Posterior cingulate gyrus (tissue), 11 donors: ENCODE measurements at regions of chr22 and their contacts with region 1.

Region 1: DNA sequence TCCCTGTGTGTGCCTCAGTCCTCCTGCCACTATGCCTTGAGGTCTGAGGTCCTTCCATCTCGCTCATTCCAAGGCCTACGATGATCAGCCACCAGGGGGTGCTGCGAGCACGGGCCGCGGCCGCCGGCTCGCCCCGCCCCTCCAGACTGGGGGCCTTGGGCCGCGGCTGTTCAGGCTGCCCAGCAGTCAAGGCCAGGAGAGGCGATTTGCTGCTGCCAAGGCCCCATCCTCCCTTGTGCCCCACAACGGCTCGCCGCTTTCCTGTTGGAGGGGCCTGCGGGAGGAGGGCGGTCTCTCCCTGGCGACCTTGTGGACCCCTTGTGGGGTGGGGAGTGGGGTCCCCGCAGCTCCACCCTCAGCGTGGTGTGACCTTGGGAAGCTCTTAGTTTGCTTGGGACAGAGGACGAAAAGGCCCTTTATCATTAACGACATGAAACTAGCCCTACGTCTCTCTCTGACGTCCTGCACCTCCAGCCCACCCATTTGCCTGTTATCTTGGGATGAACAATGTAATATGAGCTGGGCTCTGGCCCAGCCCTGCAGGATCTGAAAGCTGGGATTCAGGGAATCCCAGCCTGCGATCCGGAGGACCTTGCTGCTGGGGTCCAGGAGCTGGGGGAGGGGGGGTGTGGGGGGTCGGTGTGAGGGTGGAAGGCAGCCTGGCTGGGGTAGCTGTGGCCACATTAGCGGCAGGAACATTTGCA is 5.3 kb upstream of the GALR3 start:
- DNase-seq: peak; percentile 74 to 98 (median 89)

Region 2: GRCh38 chr22:37696657-37697537 is 121.0 kb before region 1 on chr22 and contains the start of gene TRIOBP:
- intact Hi-C with region 1: no loop called
- DNase-seq: peak; percentile 68 to 98 (median 85)

Region 3: DNA sequence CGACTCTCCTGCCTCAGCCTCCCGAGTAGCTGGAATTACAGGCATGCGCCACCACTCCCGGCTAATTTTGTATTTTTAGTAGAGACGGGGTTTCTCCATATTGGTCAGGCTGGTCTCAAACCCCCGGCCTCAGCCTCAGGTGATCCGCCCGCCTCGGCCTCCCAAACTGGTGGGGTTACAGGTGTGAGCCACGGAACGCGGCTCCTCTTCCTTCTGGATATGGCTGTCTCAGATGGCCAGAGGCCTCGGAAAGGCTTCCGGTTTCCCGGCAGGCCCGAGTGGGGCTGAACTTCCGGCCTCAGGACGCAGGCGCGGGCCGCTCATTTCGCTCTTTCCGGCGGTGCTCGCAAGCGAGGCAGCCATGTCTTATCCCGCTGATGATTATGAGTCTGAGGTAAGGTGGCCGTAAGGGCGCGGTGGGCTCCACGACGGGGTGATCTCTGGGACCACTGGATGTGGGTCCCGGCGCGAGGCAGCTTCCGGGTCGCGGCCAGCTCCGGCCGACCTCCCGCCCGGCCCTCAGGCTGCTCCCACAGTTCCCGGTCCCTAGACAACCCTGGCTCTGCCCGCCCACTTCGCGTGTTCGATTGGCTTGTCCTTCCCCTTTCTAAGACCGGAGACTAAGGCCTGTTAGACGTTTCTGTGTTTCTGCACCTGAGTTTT is 31.4 kb after region 1 on chr22 and contains the start of gene EIF3L:
- intact Hi-C with region 1: loop called (anchors 1 kb)
- DNase-seq: peak; percentile 89 to 99 (median 93)

Region 4: DNA sequence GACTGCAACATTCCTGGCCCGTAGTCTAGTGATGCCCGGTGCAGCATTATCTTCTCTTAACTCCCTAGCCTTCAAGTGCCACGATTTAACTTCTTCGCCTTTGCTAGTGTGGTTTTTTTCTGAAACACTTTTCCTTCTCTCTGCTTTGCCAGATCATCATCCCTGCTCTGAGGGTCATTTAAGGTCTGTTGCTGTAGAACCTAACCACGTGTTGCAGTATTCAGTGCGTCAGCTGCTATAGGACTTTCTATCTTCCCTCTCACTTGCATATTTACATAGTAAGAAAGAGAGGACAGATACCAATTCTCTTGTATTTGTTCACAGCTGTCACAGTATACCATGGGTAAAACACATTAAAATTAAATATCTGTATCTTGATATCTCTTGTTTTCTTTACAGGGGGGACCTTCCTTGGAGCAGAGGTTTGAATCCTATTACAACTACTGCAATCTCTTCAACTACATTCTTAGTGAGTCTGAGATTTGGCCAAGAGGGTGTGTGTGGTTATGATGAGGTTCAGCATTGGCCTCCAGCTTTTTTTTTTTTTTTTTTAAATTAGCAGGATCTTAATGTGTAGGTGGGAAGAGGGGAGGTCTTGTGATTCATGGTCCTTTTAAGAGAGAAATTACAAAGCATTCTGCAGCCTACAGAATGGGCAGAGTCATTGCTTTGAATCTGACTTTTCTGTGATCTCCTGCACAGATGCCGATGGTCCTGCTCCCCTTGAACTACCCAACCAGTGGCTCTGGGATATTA is 44.9 kb after region 1 on chr22:
- intact Hi-C with region 1: loop called (anchors 1 kb)
- DNase-seq: no peak

Region 5: DNA sequence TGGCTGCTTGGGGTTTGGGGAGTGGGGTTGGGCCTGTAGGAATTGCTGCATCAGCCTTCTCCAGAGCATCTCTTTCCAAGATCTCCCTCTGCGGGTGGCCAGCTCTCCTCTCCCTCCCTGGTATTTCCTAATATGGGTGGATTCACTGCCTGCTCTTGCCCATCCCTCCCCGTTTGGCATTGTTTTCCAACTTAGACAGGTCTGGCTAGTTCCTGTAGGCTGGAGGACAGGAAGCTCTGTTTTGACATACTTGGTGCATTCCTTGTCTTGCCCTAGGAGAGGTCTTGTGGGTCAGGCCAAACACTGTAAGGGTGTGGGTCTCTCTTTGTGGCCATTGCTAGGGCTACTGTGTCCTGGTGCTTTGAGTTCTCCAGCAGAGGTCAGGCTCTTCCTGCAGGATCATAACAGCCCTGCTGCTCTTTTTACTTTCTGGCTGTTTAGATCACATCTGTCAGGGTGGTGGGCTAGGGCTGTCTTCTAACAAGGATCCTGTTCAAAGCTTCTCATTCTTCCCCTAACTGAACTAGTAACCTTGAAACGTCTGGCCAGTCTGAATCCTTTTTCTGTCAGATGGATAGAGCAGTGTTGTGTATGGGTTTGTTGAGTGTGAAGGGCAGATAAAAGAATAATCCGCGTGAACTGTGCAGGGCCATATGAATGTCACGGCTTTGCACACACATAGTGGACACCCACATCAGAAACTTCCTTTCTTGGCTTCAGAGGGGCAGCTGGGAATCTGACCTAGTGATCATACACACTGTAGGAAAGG is 69.9 kb after region 1 on chr22:
- intact Hi-C with region 1: no loop called
- DNase-seq: peak in 4 of 10 donors; percentile 31 to 67 (median 58)

Region 6: DNA sequence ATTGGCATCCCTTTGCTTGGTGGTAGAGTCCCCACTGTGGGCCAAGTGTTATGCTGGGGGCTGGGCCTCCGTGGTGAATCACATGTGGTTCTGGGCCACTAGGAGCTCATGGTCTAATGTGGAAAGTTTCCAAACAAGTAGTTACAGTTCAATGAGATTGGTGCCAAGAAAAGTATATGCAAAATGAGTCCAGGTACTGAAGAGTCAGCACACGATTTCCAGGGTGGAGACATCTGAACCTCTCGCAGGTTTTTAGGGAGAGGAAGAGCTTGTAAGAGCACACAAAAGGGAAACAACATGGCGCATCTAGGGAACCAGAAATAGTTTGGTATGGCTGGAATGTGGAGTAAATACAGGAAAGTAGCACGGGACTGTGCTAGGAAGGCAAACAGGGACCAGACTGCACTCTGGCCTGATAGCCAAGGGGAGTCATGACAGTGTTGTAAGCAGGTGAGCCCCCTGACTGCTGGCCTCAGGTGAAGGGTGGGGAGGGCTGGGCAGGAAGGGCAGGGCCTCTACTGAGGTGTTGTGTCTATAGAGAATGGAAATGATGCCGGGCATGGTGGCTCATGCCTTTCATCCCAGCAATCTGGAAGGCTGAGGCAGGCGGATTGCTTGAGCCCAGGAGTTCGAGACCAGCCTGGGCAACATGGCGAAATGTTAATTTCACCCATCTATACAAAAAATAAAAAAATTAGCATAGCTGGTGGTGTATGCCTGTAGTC is 148.2 kb after region 1 on chr22:
- intact Hi-C with region 1: loop called (anchors 10 kb)
- DNase-seq: no peak